ENCODE measurements at regions of chrX and their contacts with region 1.

Region 1: GRCh38 chrX:119693040-119693995 is at the start of gene SEPTIN6:
- DNase-seq: peak; percentile 90 to 97 (median 95)
- H3K4me3 ChIP-seq: peak within 1 kb of the TSS; percentile 74 to 90 (median 82)
- H3K27ac ChIP-seq: peak within 1 kb of the TSS; percentile 50 to 83
- H3K4me1 ChIP-seq: peaks cover 10 to 41% (median 29%) of the 10 kb centered on the region in 4 experiments
- H3K27me3 ChIP-seq: peaks cover 0 to 6% (median 0%) of the 10 kb centered on the region in 5 experiments

Region 2: GRCh38 chrX:119676949-119677653 is 16.2 kb before region 1 on chrX:
- CTCF ChIA-PET with region 1: interaction called, 26 read pairs
- POLR2A ChIA-PET with region 1: interaction called, 13 read pairs
- DNase-seq: no peak
- H3K4me3 ChIP-seq: peak overlapping the region in 3 of 7 experiments; percentile 5 to 45 (median 19)
- H3K27ac ChIP-seq: peak overlapping the region; percentile 9 to 66
- H3K4me1 ChIP-seq: peaks cover 21 to 65% (median 53%) of the 10 kb centered on the region in 4 experiments
- H3K27me3 ChIP-seq: no peaks in the 10 kb centered on the region

Region 3: DNA sequence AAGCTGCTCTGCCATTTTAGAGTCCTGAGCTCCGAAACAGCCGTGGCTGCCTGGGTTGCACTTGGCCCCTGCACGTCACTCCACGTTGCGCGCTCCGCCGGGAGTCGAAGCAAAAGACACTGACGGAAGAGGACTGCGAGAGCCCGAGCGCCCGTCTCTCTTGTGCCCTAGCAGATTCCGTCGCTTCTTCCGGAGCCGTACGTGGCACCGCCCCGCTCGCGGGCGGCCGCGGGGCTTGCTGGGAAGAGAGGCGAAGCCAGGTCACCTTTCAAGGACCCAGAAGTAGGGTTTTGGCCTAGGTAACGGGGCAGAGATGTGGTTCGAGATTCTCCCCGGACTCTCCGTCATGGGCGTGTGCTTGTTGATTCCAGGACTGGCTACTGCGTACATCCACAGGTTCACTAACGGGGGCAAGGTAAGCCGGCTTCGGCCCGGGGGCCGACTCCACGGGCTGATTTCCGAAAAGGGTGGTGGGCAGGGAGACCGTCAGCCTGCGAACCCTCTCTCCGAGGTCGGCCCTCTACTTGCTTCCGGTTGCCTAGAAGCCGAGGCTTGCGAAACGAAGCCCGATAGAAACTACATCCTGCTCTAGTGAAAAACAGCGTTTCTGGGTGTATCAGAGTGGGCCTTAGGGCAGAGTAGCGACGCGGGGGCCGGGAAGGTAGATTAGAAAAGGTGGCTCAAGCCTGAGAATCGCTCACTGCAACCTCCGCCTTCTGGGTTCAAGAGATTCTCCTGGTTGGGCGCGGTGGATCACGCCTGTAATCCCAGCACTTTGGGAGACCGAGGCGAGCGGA is 178.5 kb after region 1 on chrX and contains the starts of genes NDUFA1 and RNF113A:
- CTCF ChIA-PET with region 1: no interaction called
- POLR2A ChIA-PET with region 1: no interaction called
- DNase-seq: peak; percentile 82 to 94 (median 91)
- H3K4me3 ChIP-seq: peak within 1 kb of the TSS; percentile 72 to 93 (median 84)
- H3K27ac ChIP-seq: peak within 1 kb of the TSS; percentile 85 to 95
- H3K4me1 ChIP-seq: peaks cover 0 to 14% (median 10%) of the 10 kb centered on the region in 4 experiments
- H3K27me3 ChIP-seq: peaks cover 0 to 10% (median 0%) of the 10 kb centered on the region in 5 experiments